HepG2 (cell line): ENCODE measurements at regions of chr21 and their contacts with region 1.

Region 1: GRCh38 chr21:37208056-37208721 is 58.9 kb downstream of the VPS26C start:
- DNase-seq: peak; percentile 13
- ATAC-seq: peak; percentile 81
- H3K4me3 ChIP-seq: peak overlapping the region; percentile 45 to 69 (median 57)
- H3K27ac ChIP-seq: peak overlapping the region; percentile 66
- H3K4me1 ChIP-seq: peaks cover 45% of the 10 kb centered on the region
- H3K27me3 ChIP-seq: no peaks in the 10 kb centered on the region
- CTCF ChIP-seq: no peak
- EP300 ChIP-seq: no peak
- POLR2A ChIP-seq: no peak
- RAD21 ChIP-seq: no peak

Region 2: DNA sequence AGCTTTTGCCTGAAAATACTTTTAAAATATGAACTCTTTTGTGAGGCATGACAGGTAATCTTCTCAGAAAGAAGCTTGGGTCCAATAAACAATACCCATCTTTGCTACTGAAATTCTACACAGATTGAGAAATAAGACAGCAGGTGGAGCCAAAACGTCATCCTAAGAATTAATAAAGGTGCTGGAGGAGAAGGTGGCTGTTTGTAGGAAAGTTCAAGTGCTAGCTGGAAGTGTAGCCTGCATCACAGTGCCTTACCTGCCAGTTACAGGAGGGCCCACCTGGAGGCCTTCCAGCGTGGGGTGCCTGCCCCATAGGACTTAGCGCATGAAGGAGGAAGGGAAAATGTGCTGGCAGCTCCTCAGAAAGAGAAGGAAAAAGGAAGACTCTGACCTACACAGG is 41.5 kb before region 1 on chr21:
- CTCF ChIA-PET with region 1: no interaction called
- POLR2A ChIA-PET with region 1: no interaction called
- in situ Hi-C with region 1: no loop called
- intact Hi-C with region 1: loop called (anchors 5 kb)
- DNase-seq: no peak
- ATAC-seq: no peak
- H3K4me3 ChIP-seq: no peak overlapping the region
- H3K27ac ChIP-seq: no peak overlapping the region
- H3K4me1 ChIP-seq: no peaks in the 10 kb centered on the region
- H3K27me3 ChIP-seq: no peaks in the 10 kb centered on the region
- CTCF ChIP-seq: peak; percentile 23; the same call in 1 of the 2 replicates
- EP300 ChIP-seq: no peak
- POLR2A ChIP-seq: no peak
- RAD21 ChIP-seq: no peak